Activated CD8-positive, alpha-beta T cell treated with anti-CD3 and anti-CD28 coated beads for 36 hours (primary cell): ENCODE measurements at regions of chr11 and their contacts with region 1.

Region 1: DNA sequence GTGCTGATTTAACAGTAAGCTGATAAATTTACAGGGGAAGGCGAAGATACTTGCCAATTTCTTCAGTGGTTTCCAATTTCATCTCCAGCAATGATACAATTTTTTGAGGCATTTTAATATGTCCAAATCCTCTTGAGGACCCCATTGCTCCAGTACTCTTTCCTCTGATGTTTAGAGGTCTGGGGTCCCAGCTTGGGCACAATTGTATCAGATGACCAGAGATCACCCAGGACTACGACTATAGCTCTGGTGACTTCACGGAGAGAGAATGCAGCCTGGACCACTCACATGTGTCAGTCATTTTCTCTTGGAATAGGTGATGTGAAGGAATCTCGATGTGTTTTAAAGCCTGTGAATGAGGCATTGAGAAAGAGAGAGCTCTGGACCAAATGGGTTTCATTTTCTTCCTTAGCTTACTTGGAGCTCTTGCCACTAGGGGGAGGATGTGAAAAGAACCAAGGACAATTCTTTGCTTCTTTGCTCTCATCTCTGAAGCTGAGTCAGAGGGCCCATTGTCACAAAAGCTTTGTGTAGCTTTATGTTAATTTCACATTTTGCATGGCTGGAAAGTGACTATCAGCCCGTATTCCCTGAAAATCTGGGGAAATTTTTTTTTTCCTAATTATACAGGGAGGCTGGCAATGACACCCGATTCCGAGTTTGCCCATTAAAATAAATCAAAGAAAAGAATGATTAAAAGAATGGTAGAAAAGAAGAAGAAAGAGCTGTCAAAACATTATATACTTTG is 6.7 kb upstream of the CCDC90B start:
- DNase-seq: peak; percentile 48
- ATAC-seq: peak; percentile 87
- H3K4me3 Mint-ChIP-seq: peak overlapping the region; percentile 58
- H3K27ac Mint-ChIP-seq: no peak overlapping the region
- H3K4me1 Mint-ChIP-seq: peaks cover 6% of the 10 kb centered on the region
- H3K27me3 Mint-ChIP-seq: peaks cover 5% of the 10 kb centered on the region
- CTCF ChIP-seq: peak; percentile 77

Region 2: GRCh38 chr11:83306200-83307080 is 13.6 kb after region 1 on chr11:
- CTCF ChIA-PET with region 1: interaction called, 13 read pairs
- POLR2A ChIA-PET with region 1: no interaction called
- intact Hi-C with region 1: no loop called
- DNase-seq: no peak
- ATAC-seq: no peak
- H3K4me3 Mint-ChIP-seq: no peak overlapping the region
- H3K27ac Mint-ChIP-seq: no peak overlapping the region
- H3K4me1 Mint-ChIP-seq: no peaks in the 10 kb centered on the region
- H3K27me3 Mint-ChIP-seq: peaks cover 4% of the 10 kb centered on the region
- CTCF ChIP-seq: no peak

Region 3: GRCh38 chr11:83724008-83724461 is 431.2 kb after region 1 on chr11:
- CTCF ChIA-PET with region 1: interaction called, 13 read pairs
- POLR2A ChIA-PET with region 1: no interaction called
- intact Hi-C with region 1: loop called (anchors 10 kb)
- DNase-seq: peak; percentile 47
- ATAC-seq: no peak
- H3K4me3 Mint-ChIP-seq: peak overlapping the region; percentile 24
- H3K27ac Mint-ChIP-seq: no peak overlapping the region
- H3K4me1 Mint-ChIP-seq: peaks cover 4% of the 10 kb centered on the region
- H3K27me3 Mint-ChIP-seq: peaks cover 17% of the 10 kb centered on the region
- CTCF ChIP-seq: no peak

Region 4: GRCh38 chr11:83819933-83820549 is 527.2 kb after region 1 on chr11:
- CTCF ChIA-PET with region 1: interaction called, 20 read pairs
- POLR2A ChIA-PET with region 1: no interaction called
- intact Hi-C with region 1: loop called (anchors 10 kb)
- DNase-seq: no peak
- ATAC-seq: no peak
- H3K4me3 Mint-ChIP-seq: no peak overlapping the region
- H3K27ac Mint-ChIP-seq: no peak overlapping the region
- H3K4me1 Mint-ChIP-seq: no peaks in the 10 kb centered on the region
- H3K27me3 Mint-ChIP-seq: no peaks in the 10 kb centered on the region
- CTCF ChIP-seq: peak; percentile 42